ENCODE measurements at regions of chr22 and their contacts with region 1.

Region 1: DNA sequence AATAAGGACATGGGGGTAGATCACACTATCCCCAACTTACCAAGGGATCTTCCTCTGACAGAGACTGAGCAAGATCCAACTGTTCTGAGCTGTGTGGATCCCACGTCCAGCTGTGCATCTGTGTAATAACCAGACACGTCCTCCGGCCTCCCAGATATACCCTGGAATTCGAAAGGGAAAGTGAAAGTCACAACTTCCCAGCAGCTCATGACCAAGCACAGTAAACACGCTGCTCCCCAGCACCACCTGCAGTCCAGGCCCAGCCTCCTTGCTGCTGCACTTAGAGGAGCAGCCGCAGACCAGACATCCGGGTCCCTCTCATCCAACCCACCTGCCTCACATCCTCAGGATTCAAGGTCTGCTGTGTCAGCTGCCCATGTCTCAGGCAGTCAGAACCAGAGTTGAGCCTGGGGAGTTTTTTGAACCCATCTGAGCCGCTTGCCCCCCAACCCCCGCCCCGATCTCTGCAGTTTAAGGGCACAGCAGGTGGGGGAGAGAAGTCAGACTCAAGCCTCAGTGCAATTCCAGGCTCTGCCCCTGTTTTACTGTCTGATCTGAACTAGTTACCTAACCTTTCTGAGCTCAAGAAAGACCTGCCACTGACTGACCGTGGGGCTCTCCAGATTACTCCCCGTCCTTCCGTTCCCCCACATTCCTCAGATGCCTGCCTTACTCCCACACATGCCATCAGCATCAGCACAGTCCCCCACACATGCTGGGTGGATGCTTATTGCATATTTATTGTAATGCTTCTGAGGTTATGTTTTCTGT is at the start of gene APOL2:
- DNase-seq: peak; percentile 88
- ATAC-seq: peak; percentile 96
- H3K4me3 ChIP-seq: peak within 1 kb of the TSS; percentile 96
- H3K27ac ChIP-seq: peak within 1 kb of the TSS; percentile 59
- H3K4me1 ChIP-seq: peaks cover 18% of the 10 kb centered on the region
- H3K27me3 ChIP-seq: no peaks in the 10 kb centered on the region
- CTCF ChIP-seq: peak; percentile 55
- total RNA-seq, gene APOL2: 9.7 and 15.7 TPM in 2 replicates

Region 2: GRCh38 chr22:36194971-36195370 is 44.6 kb before region 1 on chr22:
- CTCF ChIA-PET with region 1: no interaction called
- POLR2A ChIA-PET with region 1: no interaction called
- intact Hi-C with region 1: loop called (anchors 5 kb)
- DNase-seq: peak; percentile 65
- ATAC-seq: peak; percentile 78
- H3K4me3 ChIP-seq: no peak overlapping the region
- H3K27ac ChIP-seq: no peak overlapping the region
- H3K4me1 ChIP-seq: no peaks in the 10 kb centered on the region
- H3K27me3 ChIP-seq: no peaks in the 10 kb centered on the region
- CTCF ChIP-seq: peak; percentile 71

Region 3: DNA sequence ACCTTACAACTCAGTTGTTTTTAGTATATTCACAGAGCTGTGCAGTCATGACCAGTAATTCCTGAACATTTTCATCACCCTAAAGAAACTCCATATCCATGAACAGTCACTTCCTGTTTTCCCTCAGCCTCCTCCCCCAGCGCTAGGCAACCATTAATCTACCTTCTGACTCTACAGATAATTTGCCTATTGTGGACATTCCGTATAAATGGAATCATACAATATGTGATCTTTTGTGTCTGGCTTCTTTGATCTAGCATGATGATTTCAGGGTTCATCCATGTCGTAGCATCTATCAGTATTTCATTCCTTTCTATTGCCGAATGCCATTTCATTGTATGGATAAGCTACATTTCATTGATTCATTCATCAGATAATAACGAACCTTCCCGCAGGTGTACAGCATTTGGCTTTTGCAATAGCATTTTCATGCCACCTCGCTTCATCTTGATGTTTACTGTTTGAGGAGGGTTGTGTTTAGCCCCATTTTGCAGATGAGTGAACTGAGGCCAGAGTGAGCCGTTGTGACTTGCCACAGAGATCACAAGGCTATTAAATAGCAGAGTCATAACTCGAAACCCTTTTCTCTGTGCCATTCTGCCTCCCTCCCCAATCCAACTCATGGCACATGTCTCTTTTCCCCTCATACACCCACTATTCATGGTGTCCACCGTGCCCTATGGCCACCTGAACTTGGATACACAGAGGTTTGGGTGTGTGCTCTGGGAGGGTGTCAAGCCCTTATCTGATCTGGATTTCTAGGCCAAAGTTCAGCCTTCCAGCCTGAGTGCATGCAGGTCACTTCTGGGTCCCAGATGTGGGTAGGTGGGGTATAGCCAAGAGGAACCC is 159.3 kb after region 1 on chr22:
- CTCF ChIA-PET with region 1: no interaction called
- POLR2A ChIA-PET with region 1: no interaction called
- intact Hi-C with region 1: no loop called
- DNase-seq: peak; percentile 58
- ATAC-seq: peak; percentile 57; the same call in 1 of the 2 replicates
- H3K4me3 ChIP-seq: no peak overlapping the region
- H3K27ac ChIP-seq: peak overlapping the region; percentile 39
- H3K4me1 ChIP-seq: peaks cover 40% of the 10 kb centered on the region
- H3K27me3 ChIP-seq: no peaks in the 10 kb centered on the region
- CTCF ChIP-seq: no peak

Measured in PC-3 (cell line).